ENCODE measurements at regions of chr16 and their contacts with region 1.

Region 1: GRCh38 chr16:55364811-55365210 is 40.8 kb downstream of the IRX6 start:
- DNase-seq: no peak

Region 2: DNA sequence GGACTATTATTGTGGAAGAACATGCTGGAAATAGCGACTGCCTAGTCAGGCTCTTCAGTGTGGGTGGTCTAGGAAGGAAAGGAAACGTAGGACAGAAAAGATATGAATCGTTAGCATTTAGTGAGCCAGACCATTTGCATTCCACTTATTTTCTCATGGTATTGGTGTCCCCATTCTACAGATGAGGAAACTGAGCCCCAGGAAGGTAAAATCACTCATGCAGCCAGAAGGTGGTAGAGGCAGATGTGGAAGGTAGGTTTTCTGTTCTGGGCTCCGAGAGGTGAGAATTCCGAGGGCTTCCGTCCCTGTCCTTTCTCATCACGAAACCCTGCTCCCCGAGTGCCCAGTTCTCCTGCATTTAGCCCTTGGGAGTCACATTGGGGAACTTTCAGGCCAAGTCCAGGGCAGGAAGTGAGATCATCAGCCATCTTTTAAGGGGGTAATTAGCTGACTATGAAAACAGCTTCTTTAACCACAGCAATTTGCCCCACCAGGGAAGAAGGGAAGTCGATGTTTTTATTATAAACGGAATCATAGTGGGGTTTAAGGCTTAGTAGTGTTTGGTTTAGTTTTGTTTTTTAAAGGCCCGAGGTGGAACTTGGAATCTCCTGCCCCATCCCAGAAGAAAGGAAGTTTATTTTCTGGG is 967.5 kb before region 1 on chr16:
- intact Hi-C with region 1: loop called (anchors 5 kb)
- DNase-seq: no peak